Cardiac septum (tissue), 1 donor: ENCODE measurements at regions of chr19 and their contacts with region 1.

Region 1: DNA sequence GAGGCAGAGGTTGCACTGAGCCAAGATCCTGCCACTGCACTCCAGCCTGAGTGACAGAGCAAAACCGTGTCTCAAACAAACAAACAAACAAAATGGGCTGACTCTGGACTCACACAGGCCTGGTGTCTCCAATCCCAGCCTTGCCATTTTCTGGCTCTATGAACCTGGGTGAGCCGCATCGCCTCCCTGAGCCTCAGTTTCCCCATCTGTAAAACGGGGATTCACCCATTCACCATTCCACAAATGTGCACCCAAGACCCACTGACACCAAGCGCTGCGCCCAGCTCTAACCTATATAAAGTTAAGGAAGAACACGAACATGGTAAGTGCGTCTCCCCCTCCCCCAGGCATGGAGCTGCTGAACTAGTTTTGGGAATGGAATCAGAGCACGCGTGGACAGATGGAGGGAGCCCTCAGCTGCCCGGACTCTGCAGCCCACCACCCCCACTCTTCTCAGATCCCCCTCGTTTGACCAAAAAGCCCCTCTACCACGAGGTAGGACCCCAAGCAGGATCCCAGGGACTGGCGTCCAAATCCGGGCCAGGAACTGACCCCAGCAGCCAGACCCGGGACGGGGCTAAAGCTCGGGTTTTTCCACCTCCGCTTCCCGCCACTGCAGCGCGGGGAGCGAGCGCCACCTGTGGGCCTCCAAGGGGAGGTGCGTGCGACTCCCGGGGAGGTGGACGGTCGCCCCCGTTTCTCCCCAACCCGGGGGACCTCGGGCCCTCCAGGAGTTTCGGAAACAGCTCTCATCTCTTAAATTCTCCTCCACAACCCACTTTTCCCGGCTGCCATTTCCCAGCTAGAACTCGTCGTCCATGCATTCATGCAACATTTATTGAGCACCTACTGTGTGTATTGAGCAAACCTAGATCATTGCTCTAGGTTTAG is 33.0 kb upstream of the ADGRE5 start:
- DNase-seq: peak; percentile 86

Region 2: DNA sequence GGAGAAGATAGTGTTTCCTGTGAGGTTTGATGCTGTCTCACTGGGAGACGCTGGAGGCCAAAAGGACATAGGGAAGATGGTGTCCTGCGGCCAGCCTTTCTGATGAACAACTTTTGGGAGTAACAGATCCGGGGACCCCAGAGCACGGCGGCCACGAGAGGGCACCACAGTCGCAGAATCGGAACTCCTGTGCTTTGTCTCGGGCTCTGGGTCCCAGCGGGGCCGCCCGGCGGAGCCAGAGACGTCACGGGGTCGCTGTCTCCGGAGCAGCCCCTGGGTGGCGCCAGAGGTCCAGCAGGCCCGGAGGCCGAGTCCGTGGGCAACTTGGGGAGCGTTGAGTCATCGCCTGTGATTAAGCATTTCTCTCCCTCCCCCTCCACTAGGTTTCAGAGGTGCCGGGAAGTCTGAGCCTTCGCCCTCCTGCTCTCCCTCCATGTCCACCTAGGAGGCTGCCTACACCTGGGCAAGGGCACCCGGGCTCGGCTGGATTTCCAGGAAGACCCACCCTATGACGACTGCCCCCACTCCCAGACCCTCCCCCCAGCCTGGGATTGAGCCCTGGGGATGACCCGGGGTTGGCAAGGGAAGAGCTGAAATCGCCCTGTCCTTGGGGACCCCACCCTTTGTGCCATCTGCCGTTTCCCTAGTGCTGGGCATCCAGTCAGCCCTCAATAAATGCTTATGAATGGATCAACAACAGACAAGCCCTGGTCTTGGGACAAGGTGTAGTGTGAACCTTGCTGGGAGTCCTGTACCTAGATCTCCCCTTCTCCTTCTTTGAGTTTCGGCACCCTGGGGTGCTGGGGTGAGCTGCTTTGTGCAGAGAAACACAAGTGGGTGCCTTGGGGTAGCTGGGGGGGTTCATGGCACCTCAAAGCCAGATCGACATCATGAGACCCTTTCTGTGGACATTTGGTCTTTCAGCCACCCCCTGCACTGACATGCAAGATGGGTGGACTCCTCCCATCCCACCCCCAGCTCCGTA is 467.9 kb before region 1 on chr19:
- intact Hi-C with region 1: loop called (anchors 5 kb)
- DNase-seq: peak; percentile 99

Region 3: GRCh38 chr19:14198384-14199376 is 149.6 kb before region 1 on chr19:
- intact Hi-C with region 1: loop called (anchors 5 kb)
- DNase-seq: no peak

Region 4: GRCh38 chr19:14366498-14366915 is 18.3 kb after region 1 on chr19:
- intact Hi-C with region 1: no loop called
- DNase-seq: peak; percentile 93

Region 5: DNA sequence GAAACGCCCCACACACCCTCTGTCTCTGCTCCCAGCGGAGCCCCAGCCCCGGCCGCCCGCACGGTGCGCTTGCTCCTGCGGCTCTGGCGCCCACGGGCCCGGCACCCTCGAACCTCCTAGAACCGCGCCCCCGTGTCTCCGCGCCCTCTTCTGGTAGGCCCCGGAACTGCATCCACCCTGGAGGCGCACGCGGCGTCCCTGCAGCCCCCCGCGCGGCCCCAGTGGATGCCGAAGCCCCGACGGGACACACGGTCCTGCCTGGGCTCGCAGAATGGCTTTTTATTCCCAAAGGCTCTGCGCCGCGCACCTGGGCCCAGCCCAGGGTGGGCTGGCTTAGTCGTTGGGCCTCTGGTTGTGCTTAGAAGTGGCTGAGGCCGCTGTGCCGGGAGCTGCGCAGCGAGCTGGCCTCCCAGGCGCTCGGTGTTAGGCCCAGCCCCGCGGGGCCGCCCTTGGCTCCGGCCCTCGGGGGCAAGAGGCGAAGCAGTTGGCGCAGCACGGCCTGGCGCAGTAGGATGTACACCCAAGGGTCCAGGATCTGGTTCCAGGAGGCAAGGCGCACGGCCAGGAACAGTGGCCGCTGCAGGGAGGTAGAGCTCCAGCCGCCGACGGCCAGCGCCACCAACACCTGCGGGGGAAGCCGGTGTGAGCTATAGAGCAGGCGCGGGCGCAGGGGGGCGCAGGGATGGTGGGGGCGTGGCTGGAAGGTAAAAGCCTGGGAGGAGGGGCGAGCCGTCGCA is 124.1 kb after region 1 on chr19:
- intact Hi-C with region 1: no loop called
- DNase-seq: peak; percentile 88